Left ventricle myocardium inferior (tissue), 1 donor: ENCODE measurements at regions of chr15 and their contacts with region 1.

Region 1: DNA sequence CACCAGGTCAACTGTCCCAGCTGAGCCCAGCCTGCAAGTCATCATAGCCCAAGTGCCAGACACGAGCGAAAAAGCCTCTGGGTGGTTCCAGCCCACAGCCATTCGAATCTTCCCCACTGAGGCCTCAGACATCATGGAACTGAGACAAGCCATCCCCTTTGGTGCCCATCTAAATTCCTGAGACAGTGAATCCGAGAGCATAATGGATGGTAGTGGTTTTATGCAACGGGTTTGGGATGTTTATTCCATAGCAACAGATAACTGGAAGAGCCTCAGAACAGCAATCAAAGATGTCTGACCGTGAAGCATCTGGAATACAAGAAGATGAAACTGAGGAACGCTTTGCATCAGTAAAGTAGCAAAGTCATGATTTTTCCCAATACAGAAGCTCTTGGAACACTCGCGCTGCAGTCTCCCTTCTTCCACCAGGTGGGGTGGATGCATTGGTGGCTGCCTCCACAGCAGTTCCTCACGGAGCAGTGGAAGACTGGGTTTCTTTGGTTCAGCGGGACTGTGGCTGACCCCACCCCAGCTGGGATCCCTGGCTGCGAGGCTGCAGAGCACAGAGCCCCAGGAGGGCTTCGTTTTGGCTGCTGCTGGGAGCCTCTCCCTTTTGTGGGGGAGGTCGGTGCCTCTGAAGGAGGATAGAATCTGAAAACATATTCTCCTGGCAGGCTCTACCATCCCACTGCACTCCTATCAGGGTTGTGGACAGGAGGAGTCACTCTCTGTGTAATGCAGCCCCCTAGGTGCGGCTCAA is 26.4 kb upstream of the PDE8A start:
- DNase-seq: peak; percentile 68
- H3K4me3 ChIP-seq: peak overlapping the region; percentile 55
- H3K27ac ChIP-seq: no peak overlapping the region
- H3K4me1 ChIP-seq: peaks cover 13% of the 10 kb centered on the region
- H3K27me3 ChIP-seq: no peaks in the 10 kb centered on the region
- CTCF ChIP-seq: peak; percentile 95

Region 2: DNA sequence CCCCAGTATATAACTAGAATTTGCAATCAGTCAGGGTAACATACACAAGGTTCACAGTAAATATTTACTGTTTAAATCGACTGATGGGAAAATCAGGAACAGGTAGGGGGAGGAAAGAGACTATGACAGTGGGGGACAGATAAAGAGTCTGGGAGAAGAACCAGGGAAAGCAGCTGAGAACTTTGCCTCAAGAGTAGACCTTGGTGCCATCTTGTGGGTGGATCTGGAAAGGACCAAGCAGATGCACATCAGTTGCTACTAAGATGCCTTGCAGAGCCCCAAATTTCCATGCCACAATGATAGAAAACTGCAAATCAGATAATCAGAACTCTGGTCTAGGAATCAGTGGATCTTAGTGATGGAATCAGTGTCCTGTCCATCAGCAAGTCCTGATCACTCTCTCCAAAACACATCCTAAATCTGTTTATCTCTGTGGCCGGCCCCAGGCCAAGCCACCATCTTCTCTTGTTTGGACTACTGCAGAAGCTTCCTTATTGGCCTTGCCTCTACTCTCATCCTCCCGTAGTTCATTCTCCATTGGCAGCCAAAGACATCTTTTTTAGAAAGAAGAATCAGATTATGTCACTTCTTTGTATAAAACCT is 89.1 kb after region 1 on chr15:
- intact Hi-C with region 1: loop called (anchors 5 kb)
- DNase-seq: no peak
- H3K4me3 ChIP-seq: no peak overlapping the region
- H3K27ac ChIP-seq: peak overlapping the region; percentile 70
- H3K4me1 ChIP-seq: peaks cover 51% of the 10 kb centered on the region
- H3K27me3 ChIP-seq: no peaks in the 10 kb centered on the region
- CTCF ChIP-seq: peak; percentile 80